GM12878 (cell line): ENCODE measurements at regions of chr19 and their contacts with region 1.

Region 1: DNA sequence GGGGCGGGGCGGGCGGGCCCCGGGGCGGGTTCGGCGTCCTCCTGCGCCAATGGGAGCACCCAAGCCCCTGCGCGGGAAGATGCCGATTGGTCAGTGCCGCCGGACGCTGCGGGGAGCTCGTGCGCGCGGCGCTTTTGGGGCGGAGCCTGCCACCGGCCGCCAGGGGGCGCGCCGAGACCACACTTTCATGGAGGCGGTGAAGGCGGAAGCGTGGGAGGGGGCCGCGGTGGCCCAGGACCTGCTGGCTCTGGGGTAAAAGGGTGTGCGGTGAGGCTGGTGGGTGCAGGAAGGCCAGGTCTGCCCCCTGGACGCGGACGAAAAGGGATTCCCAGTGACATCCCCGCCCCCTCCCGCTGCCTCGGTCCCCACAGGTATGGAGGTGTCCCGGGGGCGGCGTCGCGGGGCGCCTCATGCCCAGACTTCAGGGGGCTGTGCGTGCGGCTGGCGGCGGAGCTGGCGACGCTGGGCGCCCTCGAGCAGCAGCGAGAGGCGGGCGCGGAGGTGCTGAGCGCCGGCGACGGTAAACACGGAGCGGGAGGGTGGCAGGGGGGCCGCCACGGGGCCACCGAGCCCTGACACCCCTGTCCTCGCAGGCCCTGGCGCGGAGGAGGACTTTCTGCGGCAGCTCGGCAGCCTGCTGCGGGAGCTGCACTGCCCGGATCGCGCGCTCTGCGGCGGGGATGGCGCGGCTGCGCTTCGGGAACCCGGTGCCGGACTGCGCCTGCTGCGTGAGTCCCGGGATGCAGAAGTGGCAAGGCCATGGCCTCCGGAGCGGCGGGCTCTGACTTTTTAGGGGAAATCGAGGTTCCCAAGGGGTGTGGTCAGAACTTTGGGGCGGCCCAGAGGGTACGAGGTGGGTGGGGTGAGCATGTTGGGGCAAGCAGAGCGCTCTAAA is at the start of gene FAM98C:
- DNase-seq: peak; percentile 76
- ATAC-seq: peak; percentile 99
- H3K4me3 ChIP-seq: peak within 1 kb of the TSS; percentile 86
- H3K27ac ChIP-seq: peak within 1 kb of the TSS; percentile 72
- H3K4me1 ChIP-seq: no peaks in the 10 kb centered on the region
- H3K27me3 ChIP-seq: no peaks in the 10 kb centered on the region
- CTCF ChIP-seq: peak; percentile 88 to 94 (median 90)
- EP300 ChIP-seq: no peak
- POLR2A ChIP-seq: peak; percentile 85
- RAD21 ChIP-seq: peak; percentile 90
- polyA plus RNA-seq, gene FAM98C: 1.4 to 2.3 TPM

Region 2: DNA sequence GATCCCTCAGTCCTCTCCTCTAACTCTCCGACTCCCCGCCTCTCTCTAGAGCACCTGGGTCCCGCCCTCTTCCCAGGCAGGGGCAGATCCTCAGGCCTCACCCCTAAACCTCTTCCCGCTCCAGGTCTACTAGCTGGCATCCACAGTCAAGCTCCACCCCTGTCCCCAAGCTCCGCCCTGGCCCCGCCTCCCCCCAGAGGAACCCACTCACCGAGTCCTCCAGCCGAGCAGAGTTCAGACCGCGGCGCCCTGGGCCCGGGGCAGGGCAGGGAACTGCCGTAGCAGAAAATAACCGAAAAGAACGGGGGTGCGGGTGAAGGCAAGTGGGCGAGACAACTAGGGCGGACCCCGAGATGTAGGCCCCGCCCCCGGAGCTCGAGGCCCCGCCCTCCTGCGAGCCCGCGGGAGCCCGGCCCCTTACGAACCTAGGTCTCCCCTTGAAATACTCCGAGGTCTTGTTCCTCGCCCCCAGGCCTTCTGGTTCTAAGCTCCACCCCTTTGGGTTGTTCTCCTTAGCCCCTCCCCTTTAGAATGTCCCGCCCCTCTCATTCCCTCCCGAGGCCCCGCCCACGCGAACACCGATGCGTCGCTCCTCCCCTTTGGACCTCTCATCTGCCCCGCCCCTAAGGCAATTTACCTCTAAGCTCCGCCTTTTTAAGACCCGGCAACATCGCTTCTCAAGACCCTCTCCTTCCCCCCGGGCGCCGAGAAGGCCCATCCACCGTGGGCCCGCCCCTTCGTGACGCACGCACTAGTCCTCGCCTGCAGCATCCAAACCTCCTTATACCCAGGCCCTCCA is 15.5 kb before region 1 on chr19 and contains the start of gene GGN:
- CTCF ChIA-PET with region 1: interaction called, 14 read pairs
- POLR2A ChIA-PET with region 1: interaction called, 5 read pairs
- RAD21 ChIA-PET with region 1: interaction called, 6 read pairs
- SMC1A ChIA-PET with region 1: interaction called, 6 read pairs
- in situ Hi-C with region 1: no loop called
- intact Hi-C with region 1: no loop called
- DNase-seq: no peak
- ATAC-seq: peak; percentile 80
- H3K4me3 ChIP-seq: peak within 1 kb of the TSS; percentile 69
- H3K27ac ChIP-seq: no peak within 1 kb of the TSS
- H3K4me1 ChIP-seq: peaks cover 12% of the 10 kb centered on the region
- H3K27me3 ChIP-seq: no peaks in the 10 kb centered on the region; a peak in 1 of 4 replicates
- CTCF ChIP-seq: no peak
- EP300 ChIP-seq: no peak
- POLR2A ChIP-seq: no peak; the same call in 1 of the 2 replicates
- RAD21 ChIP-seq: no peak
- polyA plus RNA-seq, gene GGN: not detected

Region 3: DNA sequence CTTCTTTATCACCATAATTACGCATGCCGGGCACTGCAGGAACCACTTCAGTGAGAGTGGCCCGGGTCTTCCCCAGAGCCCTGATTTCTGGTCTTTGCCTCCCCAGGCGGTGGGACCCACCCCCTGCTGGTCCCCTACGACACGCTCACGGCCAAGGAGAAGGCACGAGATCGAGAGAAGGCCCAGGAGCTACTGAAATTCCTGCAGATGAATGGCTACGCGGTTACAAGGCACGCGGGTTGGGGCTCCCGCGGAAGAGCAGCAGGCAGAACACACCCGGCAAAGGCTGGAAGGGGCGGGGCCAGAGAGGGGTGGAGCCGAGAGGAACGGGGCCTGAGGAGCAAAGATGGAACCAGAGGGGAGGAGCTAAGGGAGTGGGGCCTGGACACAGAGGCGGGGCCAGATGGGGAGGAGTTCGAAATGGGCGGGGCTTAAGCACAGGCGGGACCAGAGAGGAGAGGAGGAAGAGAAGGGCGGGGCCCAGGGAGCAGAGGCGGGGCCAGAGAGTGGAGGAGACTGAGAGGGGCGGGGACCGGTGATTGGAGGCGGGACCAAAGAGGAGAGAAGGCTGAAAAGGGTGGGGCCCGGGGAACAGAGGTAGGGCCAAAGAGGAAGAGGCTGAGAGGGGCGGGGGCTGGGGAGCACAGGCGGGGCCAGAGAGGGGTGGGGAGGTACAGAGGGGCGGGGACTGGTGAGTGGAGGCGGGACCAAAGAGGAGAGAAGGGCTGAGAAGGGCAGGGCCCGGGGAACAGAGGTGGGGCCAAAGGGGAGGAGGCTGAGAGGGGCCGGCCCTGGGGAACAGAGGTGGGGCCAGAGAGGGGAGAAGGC is 103.7 kb after region 1 on chr19:
- CTCF ChIA-PET with region 1: interaction called, 5 read pairs
- POLR2A ChIA-PET with region 1: no interaction called
- RAD21 ChIA-PET with region 1: interaction called, 5 read pairs
- SMC1A ChIA-PET with region 1: interaction called, 3 read pairs
- in situ Hi-C with region 1: no loop called
- intact Hi-C with region 1: loop called (anchors 5 kb)
- DNase-seq: peak; percentile 63
- ATAC-seq: peak; percentile 94
- H3K4me3 ChIP-seq: no peak overlapping the region
- H3K27ac ChIP-seq: no peak overlapping the region
- H3K4me1 ChIP-seq: no peaks in the 10 kb centered on the region; the same call in 1 of the 2 replicates
- H3K27me3 ChIP-seq: no peaks in the 10 kb centered on the region
- CTCF ChIP-seq: no peak
- EP300 ChIP-seq: no peak
- POLR2A ChIP-seq: no peak
- RAD21 ChIP-seq: no peak

Region 4: GRCh38 chr19:38618590-38619360 is 215.6 kb after region 1 on chr19 and contains the start of gene EIF3K:
- CTCF ChIA-PET with region 1: interaction called, 7 read pairs
- POLR2A ChIA-PET with region 1: interaction called, 3 read pairs
- RAD21 ChIA-PET with region 1: interaction called, 14 read pairs
- SMC1A ChIA-PET with region 1: interaction called, 8 read pairs
- in situ Hi-C with region 1: no loop called
- intact Hi-C with region 1: no loop called
- DNase-seq: peak; percentile 97
- ATAC-seq: peak; percentile 62
- H3K4me3 ChIP-seq: peak within 1 kb of the TSS; percentile 98
- H3K27ac ChIP-seq: peak within 1 kb of the TSS; percentile 98
- H3K4me1 ChIP-seq: peaks cover 12% of the 10 kb centered on the region
- H3K27me3 ChIP-seq: no peaks in the 10 kb centered on the region
- CTCF ChIP-seq: no peak
- EP300 ChIP-seq: no peak
- POLR2A ChIP-seq: peak; percentile 98
- RAD21 ChIP-seq: no peak
- polyA plus RNA-seq, gene EIF3K: 715 to 863 TPM

Region 5: DNA sequence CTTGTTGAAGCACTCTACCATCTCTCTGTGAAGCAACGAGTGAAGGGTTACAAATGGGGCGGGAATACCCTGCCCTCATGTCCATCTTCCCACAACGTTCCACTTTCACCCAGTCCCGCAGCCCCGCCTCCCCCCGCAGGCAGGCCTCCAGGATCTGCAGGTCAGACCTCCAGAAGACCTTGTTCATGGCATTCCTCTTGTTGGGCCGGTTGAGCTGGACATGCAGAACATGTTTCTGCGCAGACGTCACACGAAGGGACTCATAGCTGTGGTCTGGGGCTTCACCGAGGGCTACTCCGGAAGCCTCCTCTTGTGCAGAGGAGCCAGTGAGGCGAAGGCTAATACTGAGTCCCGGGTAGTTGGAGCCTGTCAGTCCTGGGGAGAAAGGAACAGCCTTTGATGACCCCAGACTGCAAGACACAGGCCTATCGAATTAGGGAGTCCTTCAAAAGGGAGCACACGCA is 428.0 kb after region 1 on chr19:
- CTCF ChIA-PET with region 1: interaction called, 3 read pairs
- POLR2A ChIA-PET with region 1: no interaction called
- RAD21 ChIA-PET with region 1: interaction called, 11 read pairs
- SMC1A ChIA-PET with region 1: no interaction called
- in situ Hi-C with region 1: no loop called
- intact Hi-C with region 1: no loop called
- DNase-seq: no peak
- ATAC-seq: peak; percentile 91
- H3K4me3 ChIP-seq: peak overlapping the region; percentile 75
- H3K27ac ChIP-seq: peak overlapping the region; percentile 95
- H3K4me1 ChIP-seq: no peaks in the 10 kb centered on the region; the same call in 1 of the 2 replicates
- H3K27me3 ChIP-seq: no peaks in the 10 kb centered on the region
- CTCF ChIP-seq: no peak
- EP300 ChIP-seq: no peak
- POLR2A ChIP-seq: no peak
- RAD21 ChIP-seq: no peak